GM18951 (cell line): ENCODE measurements at regions of chr1 and their contacts with region 1.

Region 1: DNA sequence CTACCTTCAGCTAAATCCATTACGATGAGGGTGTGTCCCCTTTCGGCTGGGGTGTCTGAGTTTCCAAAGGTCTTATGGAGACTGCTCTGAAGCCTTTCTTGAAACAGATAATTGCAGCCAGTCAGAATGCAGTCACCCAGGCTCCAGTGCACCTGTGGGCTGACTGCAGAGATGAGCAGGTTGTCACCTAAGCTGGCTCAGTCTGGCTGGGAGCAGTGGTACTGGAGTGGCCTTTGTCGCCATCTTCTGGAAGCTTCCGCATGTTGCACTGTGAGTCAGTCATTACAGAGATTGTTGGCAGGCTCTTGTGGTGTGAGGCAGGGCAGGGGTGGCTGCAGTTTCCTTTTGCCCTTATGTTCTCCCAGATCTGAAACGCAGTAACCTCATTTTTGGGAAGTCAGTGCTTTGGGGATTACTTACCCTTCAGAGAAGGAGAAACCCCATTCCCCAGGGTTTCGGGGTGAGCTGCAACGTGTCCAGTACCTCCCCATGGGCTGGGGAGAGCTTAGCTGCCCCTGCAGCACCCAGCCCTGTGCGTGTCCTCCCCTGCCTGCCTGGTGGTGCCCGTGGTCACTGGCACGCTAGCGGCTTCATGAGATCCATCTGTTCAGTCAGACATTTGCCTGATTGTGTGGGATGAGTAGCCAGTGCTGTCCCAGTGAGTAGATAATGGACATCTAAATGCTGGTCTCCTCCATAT is 48.0 kb downstream of the SMYD2 start:
- POLR2A ChIP-seq: no peak

Region 2: GRCh38 chr1:214123061-214123784 is 205.7 kb before region 1 on chr1:
- in situ Hi-C with region 1: no loop called
- POLR2A ChIP-seq: no peak

Region 3: GRCh38 chr1:214135886-214136285 is 193.0 kb before region 1 on chr1:
- in situ Hi-C with region 1: no loop called
- POLR2A ChIP-seq: no peak

Region 4: GRCh38 chr1:214261206-214262123 is 67.5 kb before region 1 on chr1:
- in situ Hi-C with region 1: loop called (anchors 10 kb)
- POLR2A ChIP-seq: no peak

Region 5: GRCh38 chr1:214372092-214372491 is 43.2 kb after region 1 on chr1:
- in situ Hi-C with region 1: no loop called
- POLR2A ChIP-seq: no peak

Region 6: DNA sequence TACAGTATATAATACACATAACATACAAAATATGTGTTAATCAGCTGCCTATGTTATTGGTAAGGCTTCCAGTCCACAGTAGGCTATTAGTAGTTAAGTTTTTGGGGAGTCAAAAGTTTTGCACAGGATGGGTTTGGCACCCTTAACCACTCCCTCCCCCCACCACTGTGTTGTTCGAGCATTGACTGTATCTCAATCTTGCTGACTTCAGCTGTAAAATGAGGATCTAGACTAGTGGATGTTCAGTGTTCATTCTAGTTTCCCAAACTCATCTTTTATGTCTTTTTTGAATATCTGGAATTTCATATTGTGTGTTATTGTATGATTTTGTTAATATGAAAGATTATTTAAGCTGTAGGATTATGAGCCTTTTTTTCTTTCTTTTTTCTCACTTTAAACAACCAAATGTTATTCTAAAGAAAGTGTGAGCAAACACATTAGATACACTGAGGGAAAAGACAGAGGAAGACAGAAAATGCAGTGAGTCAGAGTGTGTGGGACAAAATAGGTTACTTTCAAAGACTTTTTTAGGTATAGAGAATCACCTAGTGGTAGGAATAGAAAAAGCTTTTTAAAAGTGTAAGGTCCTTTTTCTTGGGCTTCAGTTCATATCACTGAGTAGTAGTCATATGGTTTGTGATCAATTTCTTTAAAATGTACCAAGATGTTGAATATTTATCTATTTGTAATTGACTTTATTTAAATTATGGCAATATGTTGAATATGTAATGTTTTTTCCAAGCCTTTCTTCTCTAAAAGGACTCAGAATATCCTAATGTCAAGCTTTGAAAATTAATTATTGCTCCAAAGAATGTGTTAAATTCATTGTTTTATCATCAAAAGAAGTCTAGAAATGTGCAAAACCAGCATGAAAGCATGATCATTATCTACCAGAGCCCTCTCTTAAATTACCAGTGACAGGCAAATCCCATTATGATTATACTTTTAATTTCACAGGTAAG is 256.2 kb after region 1 on chr1:
- in situ Hi-C with region 1: loop called (anchors 25 kb)
- POLR2A ChIP-seq: no peak

Region 7: DNA sequence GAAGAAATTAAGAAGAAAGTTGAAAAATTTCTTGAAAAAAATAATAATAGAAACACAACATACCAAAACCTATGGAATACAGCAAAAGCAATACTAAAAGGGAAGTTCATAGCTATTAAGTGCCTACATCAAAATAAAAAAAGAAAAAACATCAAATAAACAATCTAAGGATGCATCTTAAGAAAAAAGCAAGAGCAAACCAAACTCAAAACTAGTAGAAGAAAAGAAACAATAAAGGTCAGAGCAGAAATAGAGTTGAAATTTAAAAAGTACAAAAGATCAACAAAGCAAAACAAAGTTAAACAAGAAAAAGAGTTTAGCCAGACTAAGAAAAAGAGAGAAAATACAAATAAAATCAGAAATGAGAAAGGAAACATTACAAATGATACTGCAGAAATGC is 1054.7 kb after region 1 on chr1:
- in situ Hi-C with region 1: no loop called
- POLR2A ChIP-seq: no peak